Right ventricle myocardium superior (tissue), 1 donor: ENCODE measurements at regions of chr6 and their contacts with region 1.

Region 1: GRCh38 chr6:46011241-46012085 is 4.2 kb downstream of the CLIC5 start:
- DNase-seq: no peak
- ATAC-seq: peak; percentile 11

Region 2: DNA sequence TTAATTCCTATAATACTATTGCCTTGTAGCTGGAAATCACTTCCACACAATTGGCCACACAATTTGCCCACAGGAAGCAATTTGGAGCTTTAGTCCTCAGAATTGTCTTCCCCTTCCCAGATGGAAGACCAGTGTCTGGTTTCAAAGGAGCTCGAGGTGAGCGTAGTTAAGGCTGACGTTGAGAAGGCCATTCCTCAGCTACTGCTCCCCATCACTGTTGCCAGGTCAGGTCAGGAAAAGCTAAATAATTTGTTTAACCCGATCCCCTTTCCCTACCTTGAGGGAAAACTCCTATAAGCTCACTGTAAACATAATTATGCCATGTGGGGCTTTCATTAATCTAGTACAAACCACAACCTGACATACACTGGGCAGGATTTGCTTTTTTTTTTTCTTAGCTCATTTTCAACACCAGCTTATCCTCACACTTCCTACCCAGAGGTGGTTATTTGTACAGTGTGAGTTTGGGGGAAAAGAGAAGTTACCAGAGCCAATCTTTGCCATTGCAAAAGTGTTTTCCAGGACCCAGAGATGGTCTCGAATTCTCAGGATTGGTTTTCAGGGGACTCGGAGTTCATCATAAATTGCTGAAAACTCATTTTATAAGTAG is 238.5 kb before region 1 on chr6:
- intact Hi-C with region 1: no loop called
- DNase-seq: no peak
- ATAC-seq: no peak

Region 3: DNA sequence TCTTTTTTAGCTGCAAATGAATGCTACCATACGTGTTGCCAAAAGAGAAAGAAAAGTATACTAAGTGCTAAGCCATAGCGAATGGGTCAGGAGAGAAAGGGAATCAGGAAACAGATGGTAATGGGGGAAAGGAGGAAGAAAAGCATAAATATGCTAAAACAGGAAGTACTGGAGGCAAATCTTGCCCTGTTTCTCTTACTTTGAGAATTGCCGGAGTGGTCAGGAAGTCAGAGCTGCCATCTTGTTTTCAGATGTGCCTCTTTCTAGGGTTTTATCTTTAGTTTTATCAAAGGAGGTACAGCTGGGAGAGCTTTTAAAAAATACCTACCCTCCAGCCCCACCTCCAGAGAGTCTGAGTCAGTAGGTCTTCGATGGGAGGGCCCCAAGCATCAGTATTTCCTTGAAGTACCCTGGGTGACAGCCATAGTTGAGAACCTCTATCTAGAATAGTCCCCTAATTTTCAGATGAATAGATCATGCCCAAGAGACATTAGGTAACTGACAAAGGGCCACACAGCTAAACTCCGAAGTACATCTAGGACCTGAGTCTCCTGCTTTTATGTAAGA is 189.1 kb before region 1 on chr6:
- intact Hi-C with region 1: no loop called
- DNase-seq: no peak
- ATAC-seq: no peak

Region 4: GRCh38 chr6:45959534-45960145 is 51.8 kb before region 1 on chr6:
- intact Hi-C with region 1: loop called (anchors 5 kb)
- DNase-seq: no peak
- ATAC-seq: no peak

Region 5: GRCh38 chr6:46269447-46270229 is 258.2 kb after region 1 on chr6:
- intact Hi-C with region 1: no loop called
- DNase-seq: peak; percentile 78
- ATAC-seq: peak; percentile 60